ENCODE measurements at regions of chr11 and their contacts with region 1.

Region 1: DNA sequence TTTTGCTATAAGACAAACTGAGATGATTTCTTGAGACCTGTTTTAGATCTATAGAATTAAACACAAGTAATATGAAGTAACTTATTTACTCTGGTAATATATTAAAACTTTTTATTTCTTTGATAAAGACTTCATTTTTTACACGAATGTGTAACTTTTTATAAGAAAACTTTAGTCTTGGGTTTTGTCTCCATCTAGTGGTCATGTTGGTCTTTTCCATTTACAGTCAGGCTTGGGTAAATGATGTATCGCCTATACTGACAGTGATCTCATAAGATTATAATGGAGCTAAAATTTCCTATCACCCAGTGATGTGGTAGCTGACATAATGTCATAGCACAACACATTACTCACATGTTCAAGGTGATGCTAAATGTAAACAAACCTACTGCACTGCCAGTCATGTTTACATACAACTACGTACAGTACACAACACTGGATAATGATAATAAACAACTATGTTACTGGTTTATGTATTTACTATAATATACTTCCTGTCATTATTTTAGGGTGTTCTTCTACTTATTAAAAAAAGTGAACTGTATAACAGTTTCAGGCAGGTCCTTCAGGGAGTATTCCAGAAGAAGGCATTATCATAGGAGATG is 7.5 kb upstream of the C11orf97 start:
- DNase-seq: no peak
- ATAC-seq: no peak
- H3K4me3 ChIP-seq: no peak overlapping the region
- H3K27ac ChIP-seq: no peak overlapping the region
- H3K4me1 ChIP-seq: no peaks in the 10 kb centered on the region
- H3K27me3 ChIP-seq: no peaks in the 10 kb centered on the region
- CTCF ChIP-seq: peak; percentile 50 to 80 (median 72)
- POLR2A ChIP-seq: no peak

Region 2: GRCh38 chr11:93234602-93235207 is 1270.1 kb before region 1 on chr11:
- intact Hi-C with region 1: loop called in 1 of 10 experiments (anchors 10 kb)
- DNase-seq: peak; percentile 61 to 77 (median 74)
- ATAC-seq: peak; percentile 97 to 99 (median 97)
- H3K4me3 ChIP-seq: no peak overlapping the region
- H3K27ac ChIP-seq: no peak overlapping the region
- H3K4me1 ChIP-seq: peaks cover 0 to 2% (median 0%) of the 10 kb centered on the region in 12 donors
- H3K27me3 ChIP-seq: peaks cover 0 to 3% (median 0%) of the 10 kb centered on the region in 9 donors
- CTCF ChIP-seq: peak; percentile 85 to 95 (median 88)
- POLR2A ChIP-seq: no peak

Region 3: DNA sequence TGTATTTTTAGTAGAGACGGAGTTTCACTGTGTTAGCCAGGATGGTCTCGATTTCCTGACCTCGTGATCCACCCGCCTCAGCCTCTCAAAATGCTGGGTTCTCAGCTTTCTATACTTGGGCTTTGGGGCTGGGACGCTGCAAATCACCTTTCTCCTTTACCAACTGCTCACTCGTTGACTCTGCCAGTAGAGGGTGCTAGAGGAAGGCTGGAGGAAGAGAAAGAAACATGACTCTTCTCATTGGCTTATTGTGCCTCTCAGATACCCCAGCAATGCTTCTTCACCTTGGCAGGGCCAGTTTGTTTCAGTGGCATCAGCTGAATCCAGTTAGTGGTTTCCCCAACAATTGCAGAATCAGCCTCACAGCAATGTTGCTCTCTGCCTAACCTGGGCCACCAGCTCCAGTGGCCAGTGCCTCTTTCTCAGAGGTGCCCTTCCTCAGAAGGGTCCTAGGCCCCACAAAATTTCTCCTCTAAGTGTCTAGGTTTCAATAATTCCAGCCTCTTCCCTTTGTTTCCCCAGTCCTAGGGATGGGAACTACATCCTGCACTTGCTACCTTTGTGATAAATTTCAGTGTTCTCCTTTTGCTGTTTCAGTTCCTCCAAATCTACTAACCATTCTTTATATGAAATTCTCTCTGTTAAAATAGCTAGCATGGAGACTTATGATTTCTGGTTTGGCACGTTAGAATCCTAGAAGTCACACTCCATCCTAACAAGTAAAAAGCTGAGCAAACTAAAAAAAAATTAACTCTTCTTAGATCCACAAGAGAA is 582.9 kb before region 1 on chr11:
- intact Hi-C with region 1: loop called in 1 of 10 experiments (anchors 10 kb)
- DNase-seq: peak in 1 of 5 donors; percentile 14
- ATAC-seq: peak in 2 of 4 donors; percentile 47 to 52
- H3K4me3 ChIP-seq: no peak overlapping the region
- H3K27ac ChIP-seq: no peak overlapping the region
- H3K4me1 ChIP-seq: no peaks in the 10 kb centered on the region
- H3K27me3 ChIP-seq: peaks cover 0 to 13% (median 0%) of the 10 kb centered on the region in 9 donors
- CTCF ChIP-seq: peak; percentile 32 to 65 (median 48)
- POLR2A ChIP-seq: no peak

Region 4: DNA sequence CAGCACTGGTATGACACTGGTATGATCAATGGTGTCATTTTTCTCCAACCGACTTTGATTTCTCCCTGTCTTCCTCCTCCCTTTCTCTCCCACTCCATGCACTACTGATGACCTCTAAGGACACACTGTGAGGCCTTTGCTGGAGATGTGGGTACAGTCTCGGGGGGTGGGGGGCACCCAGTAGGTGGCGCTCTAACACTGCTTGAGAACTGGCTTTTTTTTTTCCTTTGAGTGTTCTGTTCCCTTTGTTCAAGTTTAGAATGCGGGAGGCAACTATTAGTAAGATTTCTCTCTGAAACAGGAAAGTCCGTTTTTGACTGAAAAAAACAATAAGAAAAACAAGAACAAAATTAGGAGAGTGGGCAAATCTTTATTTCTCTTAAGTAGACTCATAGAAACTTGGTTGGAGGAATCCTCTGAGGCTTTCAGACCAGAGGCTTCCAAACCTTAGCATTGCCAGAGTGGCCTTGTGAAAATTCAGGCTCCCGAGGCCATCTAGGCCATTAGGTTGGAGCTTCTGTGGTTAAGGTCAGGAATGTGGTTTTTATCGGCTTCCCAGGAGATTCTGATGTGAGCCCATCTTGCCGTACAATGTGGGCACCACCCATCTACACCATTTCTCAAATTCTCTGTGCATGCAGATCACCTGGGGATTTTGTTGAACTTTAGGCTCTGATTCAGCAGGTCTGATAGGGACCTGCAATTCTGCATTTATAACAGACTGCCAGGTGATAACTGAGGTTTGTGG is 332.9 kb before region 1 on chr11:
- intact Hi-C with region 1: loop called in 1 of 10 experiments (anchors 10 kb)
- DNase-seq: no peak
- ATAC-seq: peak in 3 of 4 donors; percentile 33 to 50 (median 39)
- H3K4me3 ChIP-seq: no peak overlapping the region
- H3K27ac ChIP-seq: no peak overlapping the region
- H3K4me1 ChIP-seq: peaks cover 0 to 20% (median 3%) of the 10 kb centered on the region in 12 donors
- H3K27me3 ChIP-seq: no peaks in the 10 kb centered on the region
- CTCF ChIP-seq: peak; percentile 26 to 60 (median 44)
- POLR2A ChIP-seq: no peak